ENCODE measurements at regions of chr16 and their contacts with region 1.

Region 1: GRCh38 chr16:28491970-28492474 is at the start of gene CLN3:
- DNase-seq: peak; percentile 95
- H3K4me3 ChIP-seq: peak within 1 kb of the TSS; percentile 79 to 98 (median 84)
- H3K27ac ChIP-seq: peak within 1 kb of the TSS; percentile 92 to 96 (median 96)
- H3K4me1 ChIP-seq: peaks cover 11 to 18% of the 10 kb centered on the region in 2 donors
- H3K27me3 ChIP-seq: no peaks in the 10 kb centered on the region
- CTCF ChIP-seq: peak in 1 of 6 experiments; percentile 12
- POLR2A ChIP-seq: peak in 1 of 2 donors; percentile 69
- total RNA-seq, gene CLN3: 32.5 to 80.9 (median 50.3) TPM

Region 2: DNA sequence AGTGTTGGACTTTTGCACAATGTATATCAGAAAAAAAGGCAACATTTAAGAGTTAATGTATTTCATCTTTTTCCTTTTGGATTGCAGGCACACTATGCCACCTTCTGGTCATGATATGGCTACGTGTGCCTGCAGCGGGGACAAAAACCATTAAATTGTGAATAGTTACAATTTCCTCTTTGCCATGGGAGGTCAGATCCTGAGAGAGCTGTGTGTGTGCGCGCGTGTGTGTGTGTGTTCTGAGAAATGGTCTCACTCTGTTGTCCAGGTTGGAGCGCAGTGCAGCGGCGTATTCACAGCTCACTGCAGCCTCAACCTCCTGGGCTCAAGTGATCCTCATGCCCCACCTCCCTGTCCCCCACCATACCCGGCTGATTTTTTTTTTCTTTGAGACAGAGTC is 57.4 kb after region 1 on chr16:
- intact Hi-C with region 1: loop called (anchors 5 kb)
- DNase-seq: peak; percentile 26
- H3K4me3 ChIP-seq: no peak overlapping the region
- H3K27ac ChIP-seq: no peak overlapping the region
- H3K4me1 ChIP-seq: peaks cover 5 to 10% of the 10 kb centered on the region in 2 donors
- H3K27me3 ChIP-seq: no peaks in the 10 kb centered on the region
- CTCF ChIP-seq: peak in 5 of 6 experiments; percentile 7 to 70 (median 63)
- POLR2A ChIP-seq: no peak

Measured in thyroid gland (tissue), 4 donors.